ENCODE measurements at regions of chr12 and their contacts with region 1.

Region 1: DNA sequence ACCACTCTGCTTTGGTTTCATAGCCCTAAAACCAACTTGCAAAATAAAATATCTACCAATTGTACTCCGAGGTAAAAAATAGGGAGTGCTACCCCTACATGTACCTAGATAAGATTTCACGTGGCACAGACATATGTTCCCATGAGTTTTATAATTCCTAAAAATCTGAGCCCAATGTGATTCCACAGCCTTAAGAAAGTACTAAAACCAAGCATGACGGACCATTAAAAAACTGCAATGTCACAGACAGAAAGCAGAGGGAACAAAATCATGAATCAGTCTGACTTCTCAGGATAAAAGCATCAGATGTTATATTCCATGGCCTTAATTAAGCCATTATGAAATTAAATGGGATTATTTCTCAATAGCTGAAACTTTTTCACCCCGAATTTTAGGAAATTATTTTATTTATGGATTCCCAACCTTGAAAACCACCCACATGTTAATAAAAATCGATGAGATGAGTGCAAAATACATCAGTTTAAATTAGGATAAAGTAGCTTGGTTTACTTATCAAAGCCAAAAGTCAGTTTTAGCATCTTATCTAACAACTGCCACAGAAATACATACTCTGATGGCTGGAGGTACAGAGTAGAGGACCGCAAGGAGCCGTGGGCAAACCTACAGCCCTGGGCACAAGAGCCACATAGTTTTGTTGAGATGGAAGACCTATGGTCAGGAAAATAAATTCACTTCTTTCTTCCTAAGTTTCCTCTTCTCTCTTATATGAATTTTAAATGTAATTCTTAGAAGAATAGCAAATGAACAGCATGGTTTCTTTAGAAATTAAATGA is 4.5 kb downstream of the ITPR2 start:
- DNase-seq: no peak
- H3K4me3 ChIP-seq: no peak overlapping the region
- H3K27ac ChIP-seq: no peak overlapping the region
- H3K4me1 ChIP-seq: peaks cover 4% of the 10 kb centered on the region
- H3K27me3 ChIP-seq: no peaks in the 10 kb centered on the region
- CTCF ChIP-seq: no peak
- EP300 ChIP-seq: no peak
- POLR2A ChIP-seq: no peak

Region 2: GRCh38 chr12:26768611-26769603 is 59.6 kb before region 1 on chr12:
- intact Hi-C with region 1: no loop called
- DNase-seq: no peak
- H3K4me3 ChIP-seq: no peak overlapping the region
- H3K27ac ChIP-seq: no peak overlapping the region
- H3K4me1 ChIP-seq: no peaks in the 10 kb centered on the region
- H3K27me3 ChIP-seq: no peaks in the 10 kb centered on the region
- CTCF ChIP-seq: no peak
- EP300 ChIP-seq: no peak
- POLR2A ChIP-seq: no peak

Region 3: GRCh38 chr12:26810330-26810729 is 18.1 kb before region 1 on chr12:
- intact Hi-C with region 1: loop called in 1 of 4 experiments (anchors 2 kb)
- DNase-seq: peak; percentile 25 to 52 (median 47)
- H3K4me3 ChIP-seq: no peak overlapping the region
- H3K27ac ChIP-seq: no peak overlapping the region
- H3K4me1 ChIP-seq: no peaks in the 10 kb centered on the region
- H3K27me3 ChIP-seq: no peaks in the 10 kb centered on the region
- CTCF ChIP-seq: no peak
- EP300 ChIP-seq: no peak
- POLR2A ChIP-seq: no peak

Measured in ovary (tissue), 10 donors.